ENCODE measurements at regions of chr18 and their contacts with region 1.

Region 1: DNA sequence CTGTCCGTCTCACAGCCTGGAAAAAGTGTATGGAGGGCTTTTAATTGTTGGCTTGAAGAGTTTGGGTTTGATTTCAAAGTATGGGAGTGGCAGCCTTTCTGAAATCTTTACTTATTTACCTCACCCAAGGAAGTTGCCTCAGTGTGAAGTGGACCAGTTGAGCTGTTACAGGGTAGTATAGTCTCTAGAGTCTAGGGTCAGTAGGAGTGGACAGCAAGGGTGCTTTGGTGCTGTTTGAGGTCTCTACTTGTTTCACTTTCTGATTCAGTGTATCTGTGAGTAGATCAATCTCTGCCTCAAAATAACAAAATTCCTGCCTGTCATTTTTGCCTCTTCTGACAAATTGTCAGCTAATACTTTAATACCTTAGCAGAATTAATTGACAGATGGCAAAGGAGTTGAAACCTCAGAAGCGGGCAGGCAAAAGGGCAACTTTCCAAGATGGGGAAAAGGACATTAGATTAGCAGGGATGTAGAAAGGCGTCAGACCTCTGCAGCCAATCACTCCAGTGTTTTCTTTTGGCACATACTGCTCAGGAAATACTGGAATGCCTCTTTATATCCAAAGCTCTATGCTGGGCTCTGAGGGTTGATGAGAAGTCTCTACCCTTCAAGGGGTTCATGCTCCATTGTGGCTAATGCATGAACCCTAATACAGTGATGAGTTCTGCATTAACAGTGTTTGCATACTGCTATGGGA is 5.9 kb downstream of the RIOK3 start:
- DNase-seq: no peak
- ATAC-seq: peak; percentile 85
- H3K4me3 ChIP-seq: peak overlapping the region; percentile 48; the same call in 1 of the 2 replicates
- H3K27ac ChIP-seq: no peak overlapping the region
- H3K4me1 ChIP-seq: no peaks in the 10 kb centered on the region
- H3K27me3 ChIP-seq: no peaks in the 10 kb centered on the region
- CTCF ChIP-seq: no peak
- EP300 ChIP-seq: no peak
- POLR2A ChIP-seq: no peak
- RAD21 ChIP-seq: no peak

Region 2: DNA sequence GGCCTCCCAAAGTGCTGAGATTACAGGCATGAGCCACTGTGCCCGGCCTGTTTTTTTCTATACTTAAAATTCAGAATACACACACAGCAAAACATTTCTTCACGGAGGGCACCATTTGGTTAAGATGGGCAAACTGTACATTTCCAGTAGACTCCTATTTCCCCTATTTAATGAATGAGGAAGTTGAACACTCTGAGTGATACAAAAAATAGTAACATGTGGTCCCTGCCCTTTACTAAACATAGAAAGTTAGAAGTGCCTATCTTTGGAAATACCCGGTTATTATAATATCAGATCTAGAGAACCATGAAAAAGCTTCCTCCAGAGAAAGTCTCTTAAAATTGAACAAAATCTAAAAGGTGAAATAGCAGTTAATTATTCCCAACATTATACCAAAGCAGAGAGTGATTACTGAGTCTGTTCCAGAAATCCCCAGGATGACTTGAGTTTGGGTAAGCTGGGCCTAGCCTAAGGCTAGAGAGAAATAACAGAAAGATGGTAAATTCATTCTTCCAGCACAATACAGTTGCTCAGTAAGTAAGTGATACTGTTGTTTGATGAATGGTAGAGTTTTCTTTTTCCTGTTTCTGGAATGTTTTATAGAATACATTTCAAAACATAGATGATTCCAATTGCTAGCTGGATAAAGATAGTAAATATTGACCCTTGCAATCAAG is 21.0 kb after region 1 on chr18:
- CTCF ChIA-PET with region 1: interaction called, 7 read pairs
- POLR2A ChIA-PET with region 1: interaction called, 17 read pairs
- RAD21 ChIA-PET with region 1: interaction called, 6 read pairs
- SMC1A ChIA-PET with region 1: interaction called, 19 read pairs
- in situ Hi-C with region 1: no loop called
- intact Hi-C with region 1: no loop called
- DNase-seq: no peak
- ATAC-seq: peak; percentile 90
- H3K4me3 ChIP-seq: peak overlapping the region; percentile 29; the same call in 1 of the 2 replicates
- H3K27ac ChIP-seq: peak overlapping the region; percentile 73
- H3K4me1 ChIP-seq: peaks cover 19% of the 10 kb centered on the region
- H3K27me3 ChIP-seq: no peaks in the 10 kb centered on the region
- CTCF ChIP-seq: no peak
- EP300 ChIP-seq: no peak
- POLR2A ChIP-seq: no peak
- RAD21 ChIP-seq: no peak